Calu3 (cell line): ENCODE measurements at regions of chr6 and their contacts with region 1.

Region 1: DNA sequence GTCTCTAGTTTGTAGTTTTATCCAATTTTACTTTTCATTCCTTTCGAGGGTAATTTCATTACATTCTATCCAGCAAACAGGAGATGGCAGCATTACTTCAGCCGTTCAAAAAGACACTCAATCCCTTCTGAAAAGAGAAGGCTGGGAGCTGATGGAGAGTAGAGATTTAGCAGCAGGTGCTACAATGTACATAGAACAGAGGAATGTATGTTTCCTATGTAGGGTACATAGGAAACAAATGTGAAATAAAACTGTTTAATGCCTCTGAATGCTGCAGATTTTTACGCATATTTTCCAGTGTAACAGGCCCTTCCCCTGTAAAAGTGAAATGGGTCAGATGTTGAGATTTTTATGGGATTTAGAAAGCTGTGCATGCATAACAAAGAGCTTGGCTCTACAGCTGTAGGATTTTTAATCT is 16.0 kb downstream of the RPS12 start:
- DNase-seq: peak; percentile 34
- H3K4me3 Mint-ChIP-seq: no peak overlapping the region
- H3K27ac Mint-ChIP-seq: no peak overlapping the region
- H3K4me1 Mint-ChIP-seq: no peaks in the 10 kb centered on the region
- H3K27me3 Mint-ChIP-seq: no peaks in the 10 kb centered on the region
- CTCF ChIP-seq: peak; percentile 48

Region 2: GRCh38 chr6:132937466-132937906 is 107.1 kb after region 1 on chr6:
- CTCF ChIA-PET with region 1: interaction called, 5 read pairs
- intact Hi-C with region 1: loop called (anchors 1 kb)
- DNase-seq: peak; percentile 80
- H3K4me3 Mint-ChIP-seq: peak overlapping the region; percentile 48
- H3K27ac Mint-ChIP-seq: no peak overlapping the region
- H3K4me1 Mint-ChIP-seq: peaks cover 8% of the 10 kb centered on the region
- H3K27me3 Mint-ChIP-seq: no peaks in the 10 kb centered on the region
- CTCF ChIP-seq: peak; percentile 58

Region 3: DNA sequence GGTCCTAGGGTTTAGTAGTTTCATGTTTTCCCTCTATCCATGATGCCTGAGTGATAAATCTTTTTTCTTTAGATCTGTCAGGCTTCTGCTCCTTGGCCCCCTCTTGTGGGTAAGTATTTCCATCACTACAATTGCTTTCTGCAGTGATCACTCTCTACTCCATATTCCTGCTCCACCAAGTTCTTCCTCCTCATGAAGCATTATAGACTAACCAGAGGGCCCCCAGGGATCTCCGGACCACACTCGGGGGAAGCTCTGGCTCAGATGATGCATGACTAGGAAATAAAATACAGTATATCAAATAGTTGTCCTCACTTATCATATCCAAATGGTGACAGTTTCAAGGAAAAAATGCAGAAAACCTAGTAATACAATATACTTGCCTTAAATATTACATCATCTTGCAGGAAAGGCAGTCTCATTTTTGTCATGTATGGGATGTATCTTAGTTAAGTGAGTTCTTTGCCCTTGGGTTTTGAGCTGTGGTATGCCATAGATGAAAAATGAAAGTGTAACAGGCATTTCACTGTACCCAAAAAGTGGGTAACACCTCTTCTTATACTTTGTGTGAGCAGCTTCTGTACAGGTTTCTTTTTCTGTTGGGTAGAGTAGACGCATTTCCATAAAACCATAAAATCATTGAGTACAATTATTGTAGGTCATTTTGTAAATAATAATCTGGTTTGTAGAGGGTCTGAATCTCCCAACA is 209.9 kb after region 1 on chr6:
- CTCF ChIA-PET with region 1: no interaction called
- intact Hi-C with region 1: loop called (anchors 1 kb)
- DNase-seq: peak; percentile 61
- H3K4me3 Mint-ChIP-seq: no peak overlapping the region
- H3K27ac Mint-ChIP-seq: no peak overlapping the region
- H3K4me1 Mint-ChIP-seq: peaks cover 16% of the 10 kb centered on the region
- H3K27me3 Mint-ChIP-seq: no peaks in the 10 kb centered on the region
- CTCF ChIP-seq: peak; percentile 57

Region 4: DNA sequence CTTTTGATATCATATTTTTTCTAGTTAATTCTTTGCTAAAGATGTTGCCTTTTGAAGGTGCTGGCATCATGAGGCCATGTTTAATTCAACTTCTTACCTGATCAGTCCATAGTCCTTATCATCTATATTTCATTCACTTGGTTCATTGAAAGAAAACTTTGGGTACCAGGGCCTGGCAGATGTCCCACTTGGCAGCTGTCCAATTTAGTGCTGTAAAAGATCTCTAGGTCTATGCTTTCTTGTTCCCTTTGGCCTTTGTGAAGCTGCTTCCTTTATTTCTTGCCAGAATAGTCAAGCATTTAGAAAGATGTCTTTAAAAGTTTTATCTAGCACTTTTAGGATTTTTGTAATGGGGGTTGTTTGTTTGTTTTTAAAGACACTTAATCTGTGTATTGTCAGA is 349.1 kb after region 1 on chr6:
- CTCF ChIA-PET with region 1: no interaction called
- intact Hi-C with region 1: loop called (anchors 5 kb)
- DNase-seq: peak; percentile 35
- H3K4me3 Mint-ChIP-seq: no peak overlapping the region
- H3K27ac Mint-ChIP-seq: no peak overlapping the region
- H3K4me1 Mint-ChIP-seq: no peaks in the 10 kb centered on the region
- H3K27me3 Mint-ChIP-seq: no peaks in the 10 kb centered on the region
- CTCF ChIP-seq: no peak

Region 5: DNA sequence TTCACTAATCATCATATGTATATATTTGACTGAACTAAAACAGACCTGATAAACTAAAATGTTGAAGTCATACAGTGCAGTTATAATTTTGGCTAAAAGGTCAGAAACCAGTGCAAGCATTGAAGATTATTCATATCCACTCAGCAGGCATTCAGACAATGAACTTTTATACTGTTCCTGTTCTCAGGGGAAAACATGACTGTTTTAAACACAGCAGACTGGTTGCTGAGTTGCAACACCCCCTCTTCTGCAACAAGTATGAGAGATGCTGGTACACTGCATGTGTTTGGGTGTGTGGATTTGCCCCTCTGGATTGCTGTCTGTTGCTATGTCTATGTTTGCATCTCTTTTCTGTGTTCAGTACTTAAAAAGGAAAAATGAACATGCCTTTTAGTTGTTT is 617.6 kb after region 1 on chr6:
- CTCF ChIA-PET with region 1: no interaction called
- intact Hi-C with region 1: no loop called
- DNase-seq: no peak
- H3K4me3 Mint-ChIP-seq: no peak overlapping the region
- H3K27ac Mint-ChIP-seq: no peak overlapping the region
- H3K4me1 Mint-ChIP-seq: no peaks in the 10 kb centered on the region
- H3K27me3 Mint-ChIP-seq: no peaks in the 10 kb centered on the region
- CTCF ChIP-seq: no peak